ENCODE measurements at regions of chr12 and their contacts with region 1.

Region 1: DNA sequence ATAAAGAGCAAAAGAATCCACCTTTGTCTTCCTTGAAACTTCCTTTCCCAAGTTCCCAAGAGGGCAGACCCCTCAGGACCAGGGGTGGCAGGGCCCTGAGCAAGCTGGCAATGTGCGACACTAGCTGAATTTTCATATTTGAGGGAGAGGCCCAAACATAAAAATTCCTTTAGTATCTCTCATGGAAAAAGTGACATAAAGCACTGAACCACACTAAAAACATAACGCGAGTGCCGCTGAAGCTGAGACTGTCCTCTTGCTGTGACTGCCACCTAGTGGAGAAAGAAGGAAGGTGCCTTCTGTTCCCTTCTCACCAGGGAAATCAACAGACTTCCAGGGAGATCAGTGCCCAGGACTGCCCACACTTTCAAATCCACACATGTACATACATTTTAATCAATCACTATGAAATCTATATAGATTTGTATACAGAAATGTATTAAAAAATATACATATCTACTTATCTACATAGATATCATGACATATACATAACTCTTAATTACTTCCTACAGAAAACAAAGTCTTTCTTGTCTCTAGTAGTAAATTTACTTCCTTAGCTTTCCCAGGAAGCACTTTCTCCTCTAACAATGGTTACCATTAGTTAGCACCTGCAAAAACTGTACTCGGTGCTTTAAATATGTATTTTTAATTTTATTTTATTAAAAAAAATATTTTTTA is 53.8 kb downstream of the SSH1 start:
- DNase-seq: peak; percentile 60 to 80
- H3K4me3 ChIP-seq: no peak overlapping the region
- H3K4me1 ChIP-seq: no peaks in the 10 kb centered on the region
- H3K27me3 ChIP-seq: no peaks in the 10 kb centered on the region

Region 2: DNA sequence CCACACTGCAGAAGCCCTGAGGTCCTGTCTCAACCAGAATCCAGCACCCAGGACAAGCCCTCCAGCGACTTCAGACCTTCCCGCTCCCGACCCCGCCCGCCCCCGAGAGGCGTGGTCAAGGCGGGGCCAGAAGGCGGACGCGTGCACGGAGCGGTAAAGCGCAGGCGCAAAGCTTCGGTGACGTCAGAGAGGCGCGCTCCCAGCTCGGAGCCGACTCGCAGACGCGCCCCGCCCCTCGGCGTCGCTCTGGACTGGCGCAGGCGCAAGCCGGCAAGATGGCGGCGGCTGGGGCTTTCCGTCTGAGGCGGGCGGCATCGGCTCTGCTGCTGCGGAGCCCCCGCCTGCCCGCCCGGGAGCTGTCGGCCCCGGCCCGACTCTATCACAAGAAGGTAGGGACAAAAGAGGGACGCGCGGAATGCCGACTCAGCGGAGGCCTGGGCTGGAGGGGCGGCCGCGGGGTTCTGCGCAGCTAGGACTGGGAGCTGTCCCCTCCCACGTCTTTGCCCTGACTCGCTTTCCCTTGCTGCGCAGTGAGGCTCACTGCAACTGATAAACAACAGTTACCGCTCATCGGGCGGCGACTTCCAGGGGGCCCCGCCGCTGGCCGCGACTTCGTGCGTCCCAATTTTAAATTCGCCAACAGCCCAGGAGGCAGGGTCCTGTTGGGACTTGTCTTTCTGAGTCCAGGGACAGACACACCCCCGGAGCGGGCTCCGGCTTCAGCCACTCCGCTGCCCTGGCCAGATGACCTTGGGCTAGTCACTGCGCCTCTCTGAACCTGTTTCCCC is 241.0 kb before region 1 on chr12 and contains the start of gene ISCU:
- in situ Hi-C with region 1: loop called (anchors 10 kb)
- DNase-seq: peak; percentile 90 to 98
- H3K4me3 ChIP-seq: peak within 1 kb of the TSS; percentile 86
- H3K4me1 ChIP-seq: peaks cover 8% of the 10 kb centered on the region
- H3K27me3 ChIP-seq: no peaks in the 10 kb centered on the region

Region 3: DNA sequence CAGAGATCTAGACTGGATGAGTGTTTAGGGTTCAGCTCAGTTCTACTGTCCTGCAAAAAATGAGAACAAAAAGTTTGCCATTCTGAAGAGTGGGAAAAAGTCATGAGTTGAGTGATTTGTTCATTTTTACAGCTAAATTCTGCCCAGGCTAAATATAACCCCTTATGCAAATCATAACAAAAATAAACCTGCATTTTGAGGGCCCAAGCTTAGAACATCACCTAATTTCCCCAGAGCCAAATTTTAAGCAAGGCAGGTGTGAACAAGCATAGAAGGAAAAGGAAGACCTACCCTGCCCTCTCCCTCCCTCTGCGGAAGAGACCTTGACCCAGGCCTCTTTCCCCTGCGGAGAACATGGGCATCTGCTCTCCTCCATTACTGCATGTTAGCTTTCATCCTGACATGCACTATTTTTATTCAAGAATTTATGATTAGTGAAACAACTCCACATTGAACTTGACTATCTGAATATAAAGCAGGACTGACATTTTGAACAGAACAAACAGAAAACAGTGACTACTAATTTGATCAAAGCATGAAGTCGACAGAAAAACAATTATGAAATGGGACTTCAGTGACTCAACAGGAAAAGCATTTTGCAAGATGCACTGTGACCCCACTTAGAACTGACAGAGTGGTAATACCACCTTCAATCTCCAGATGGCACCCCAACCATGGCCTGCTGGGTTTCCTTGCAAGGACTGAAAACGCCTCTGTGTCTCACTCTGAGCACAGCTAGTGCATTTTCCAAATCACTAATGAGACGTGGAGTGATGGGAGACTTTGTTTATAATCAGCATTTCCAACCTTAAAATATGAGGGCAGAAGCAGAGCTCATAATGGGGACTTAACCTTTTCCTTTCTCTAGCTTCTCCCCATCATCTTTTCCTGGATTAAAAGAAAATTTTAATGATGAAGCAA is 139.0 kb before region 1 on chr12:
- in situ Hi-C with region 1: loop called (anchors 5 kb)
- DNase-seq: peak; percentile 73 to 85
- H3K4me3 ChIP-seq: no peak overlapping the region
- H3K4me1 ChIP-seq: no peaks in the 10 kb centered on the region; the same call in 1 of the 2 replicates
- H3K27me3 ChIP-seq: no peaks in the 10 kb centered on the region

Region 4: DNA sequence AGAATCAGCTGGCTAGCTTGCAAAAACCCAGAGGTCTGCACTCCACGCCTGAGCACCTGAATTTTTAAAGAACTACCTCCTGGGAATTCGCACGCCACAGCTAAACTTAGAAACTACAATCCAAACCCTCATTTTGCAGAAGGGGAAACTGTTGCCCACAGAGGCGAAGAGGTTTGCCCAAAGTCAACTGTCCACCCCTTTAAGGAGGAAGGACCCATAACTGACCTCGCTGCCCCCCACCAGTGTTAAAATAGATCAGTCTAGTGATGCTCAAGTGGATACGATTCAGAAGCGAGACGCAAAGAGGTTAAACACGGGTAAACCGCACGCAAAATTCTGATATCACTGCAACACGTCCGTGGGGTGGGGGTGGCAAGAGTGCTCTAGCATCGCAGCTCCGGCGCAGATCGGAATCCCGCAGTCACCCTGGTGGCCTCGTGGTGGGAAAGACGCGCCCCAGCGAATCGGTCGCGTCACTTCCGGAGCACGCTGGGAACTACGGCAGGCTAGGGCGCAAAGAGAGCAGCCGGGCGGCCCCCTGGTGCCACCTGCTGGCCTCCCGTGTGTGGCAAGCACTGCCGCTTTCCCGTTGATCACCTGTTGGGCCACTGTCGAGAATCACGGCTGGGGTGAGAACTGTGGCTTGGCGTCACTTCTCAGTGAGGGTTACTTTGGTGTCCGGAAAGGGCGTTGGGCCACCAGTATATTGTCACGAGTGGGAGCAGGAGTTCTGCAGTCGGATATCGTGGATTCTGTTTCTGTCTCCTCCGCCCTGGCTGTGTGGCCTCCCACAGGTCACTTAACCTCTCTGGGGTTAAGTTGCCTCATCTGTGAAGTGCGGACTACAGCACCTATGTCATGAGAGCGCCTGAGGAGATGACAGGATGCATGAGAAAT is 289.7 kb after region 1 on chr12 and contains the start of gene ALKBH2:
- in situ Hi-C with region 1: loop called (anchors 10 kb)
- DNase-seq: peak; percentile 83 to 95
- H3K4me3 ChIP-seq: peak within 1 kb of the TSS; percentile 41
- H3K4me1 ChIP-seq: peaks cover 22% of the 10 kb centered on the region
- H3K27me3 ChIP-seq: no peaks in the 10 kb centered on the region

Measured in HAP-1 (cell line).